ENCODE measurements at regions of chr13 and their contacts with region 1.

Region 1: GRCh38 chr13:106083620-106084350 is 451.7 kb downstream of the EFNB2 start:
- DNase-seq: peak; percentile 86
- H3K4me3 ChIP-seq: no peak overlapping the region
- H3K27ac ChIP-seq: no peak overlapping the region
- H3K4me1 ChIP-seq: no peaks in the 10 kb centered on the region
- H3K27me3 ChIP-seq: no peaks in the 10 kb centered on the region
- CTCF ChIP-seq: peak; percentile 71 to 77
- POLR2A ChIP-seq: no peak

Region 2: DNA sequence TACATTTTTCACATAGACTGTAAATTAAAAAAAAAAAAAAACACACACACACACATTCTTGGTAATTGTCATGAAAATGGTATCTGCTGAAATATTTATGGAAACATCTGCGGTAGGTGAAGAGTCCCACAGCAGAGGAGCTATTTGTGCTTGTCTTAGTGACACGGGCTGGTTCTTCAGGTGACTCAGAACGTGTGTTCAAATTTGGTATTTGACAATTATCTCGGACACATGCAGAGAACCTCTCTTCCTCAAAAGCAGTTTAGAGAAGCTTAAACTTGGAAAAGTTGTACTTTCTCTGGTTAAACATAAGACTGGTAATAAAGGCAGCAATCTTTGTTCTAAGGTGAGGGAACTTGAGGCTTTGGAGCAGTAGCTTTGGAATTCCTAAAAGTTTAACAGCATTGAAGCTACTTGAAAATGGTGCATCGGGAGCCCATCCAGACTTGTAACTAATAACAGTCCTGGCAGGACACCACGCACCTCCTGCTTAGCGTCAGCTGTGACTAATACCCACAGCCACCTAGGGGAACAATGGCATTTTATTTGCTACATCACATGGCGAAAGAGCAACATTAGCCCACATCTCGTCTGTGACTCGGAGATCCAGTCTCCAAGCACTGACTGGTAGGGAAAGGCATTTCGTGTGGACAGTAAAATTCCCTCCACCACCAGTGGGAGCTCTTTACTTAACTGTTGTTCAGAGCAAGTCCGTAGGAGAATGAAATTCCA is 1512.5 kb before region 1 on chr13:
- CTCF ChIA-PET with region 1: no interaction called
- POLR2A ChIA-PET with region 1: no interaction called
- dilution Hi-C with region 1: no loop called
- intact Hi-C with region 1: loop called (anchors 10 kb)
- DNase-seq: peak; percentile 89
- H3K4me3 ChIP-seq: no peak overlapping the region
- H3K27ac ChIP-seq: peak overlapping the region; percentile 4
- H3K4me1 ChIP-seq: no peaks in the 10 kb centered on the region
- H3K27me3 ChIP-seq: no peaks in the 10 kb centered on the region
- CTCF ChIP-seq: peak; percentile 73 to 76
- POLR2A ChIP-seq: no peak

Region 3: GRCh38 chr13:106052200-106052767 is 31.5 kb before region 1 on chr13:
- CTCF ChIA-PET with region 1: no interaction called
- POLR2A ChIA-PET with region 1: no interaction called
- dilution Hi-C with region 1: no loop called
- intact Hi-C with region 1: no loop called
- DNase-seq: no peak
- H3K4me3 ChIP-seq: no peak overlapping the region
- H3K27ac ChIP-seq: no peak overlapping the region
- H3K4me1 ChIP-seq: no peaks in the 10 kb centered on the region
- H3K27me3 ChIP-seq: no peaks in the 10 kb centered on the region
- CTCF ChIP-seq: no peak
- POLR2A ChIP-seq: no peak

Region 4: DNA sequence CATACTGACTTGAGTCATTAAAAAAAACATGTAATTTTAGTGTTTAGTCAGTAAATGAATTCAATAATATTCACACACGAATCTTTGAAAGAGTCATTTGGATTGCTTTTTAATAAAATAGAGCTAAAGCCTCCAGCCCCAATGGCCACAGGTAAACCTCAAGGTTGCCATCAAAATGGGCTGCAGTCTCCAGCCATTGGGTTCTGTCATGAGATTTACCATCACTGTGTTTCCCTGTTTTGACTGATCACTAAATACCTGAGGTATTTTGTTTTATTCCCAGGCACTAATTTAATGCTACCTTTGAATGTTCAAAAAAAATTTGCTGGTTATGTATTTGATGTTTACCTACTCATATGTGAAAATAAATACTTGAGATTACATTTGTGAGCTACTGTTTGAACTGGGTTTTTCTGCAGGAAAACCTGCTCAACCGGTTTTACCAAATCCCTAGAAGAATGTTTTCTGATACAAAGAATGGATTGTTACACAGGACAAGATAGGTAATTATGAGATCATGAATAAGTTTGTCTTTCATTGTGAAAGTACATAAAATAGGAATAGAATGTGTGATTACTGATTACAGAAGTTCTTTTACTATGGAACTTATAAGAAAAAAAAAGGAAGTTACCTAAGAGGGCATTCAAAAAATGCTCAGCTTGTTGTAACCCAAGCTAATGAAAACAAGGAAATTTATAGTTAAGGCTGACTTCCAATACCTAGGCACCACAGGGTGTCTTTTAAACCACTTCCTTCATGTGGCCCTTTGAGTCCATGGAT is 60.3 kb after region 1 on chr13:
- CTCF ChIA-PET with region 1: no interaction called
- POLR2A ChIA-PET with region 1: no interaction called
- dilution Hi-C with region 1: no loop called
- intact Hi-C with region 1: no loop called
- DNase-seq: no peak
- H3K4me3 ChIP-seq: no peak overlapping the region
- H3K27ac ChIP-seq: no peak overlapping the region
- H3K4me1 ChIP-seq: peaks cover 5% of the 10 kb centered on the region
- H3K27me3 ChIP-seq: no peaks in the 10 kb centered on the region
- CTCF ChIP-seq: no peak
- POLR2A ChIP-seq: no peak

Region 5: GRCh38 chr13:106161146-106161545 is 77.4 kb after region 1 on chr13:
- CTCF ChIA-PET with region 1: interaction called, 3 read pairs
- POLR2A ChIA-PET with region 1: no interaction called
- dilution Hi-C with region 1: no loop called
- intact Hi-C with region 1: loop called (anchors 5 kb)
- DNase-seq: peak; percentile 78
- H3K4me3 ChIP-seq: no peak overlapping the region
- H3K27ac ChIP-seq: peak overlapping the region; percentile 40
- H3K4me1 ChIP-seq: peaks cover 20% of the 10 kb centered on the region
- H3K27me3 ChIP-seq: no peaks in the 10 kb centered on the region
- CTCF ChIP-seq: no peak
- POLR2A ChIP-seq: no peak

Region 6: DNA sequence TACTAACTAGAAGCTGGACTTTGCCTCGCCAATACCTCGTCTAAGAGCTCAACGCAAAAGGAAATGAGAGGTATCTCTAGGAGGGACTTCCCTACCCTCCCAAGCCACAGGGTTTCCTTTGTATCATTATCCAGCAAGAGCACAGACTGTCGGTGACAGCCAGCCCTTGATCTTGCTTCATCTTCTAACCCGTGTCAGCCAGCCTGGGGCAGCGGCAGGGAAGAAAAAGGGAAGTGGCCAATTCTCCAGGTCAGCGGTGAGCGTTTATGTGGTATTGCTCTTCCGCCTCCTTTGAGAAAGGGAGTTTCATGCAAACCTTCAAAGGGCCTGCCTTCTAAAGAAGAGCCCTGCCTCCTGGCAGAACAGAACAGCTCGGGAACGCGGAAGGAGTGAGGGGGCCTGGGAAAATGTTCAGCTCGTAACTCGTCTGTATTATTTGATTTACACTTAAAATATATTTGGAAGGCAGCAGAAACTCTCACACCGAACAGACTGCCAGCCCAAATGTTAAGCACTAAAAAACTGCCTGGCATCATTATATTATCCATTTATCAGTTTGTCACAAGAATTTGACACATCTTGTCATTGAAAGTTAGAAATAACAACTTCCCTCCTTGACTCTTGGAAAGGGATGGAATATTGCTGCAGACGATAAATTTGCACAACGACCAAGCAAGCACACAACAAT is 409.9 kb after region 1 on chr13:
- CTCF ChIA-PET with region 1: no interaction called
- POLR2A ChIA-PET with region 1: no interaction called
- dilution Hi-C with region 1: no loop called
- intact Hi-C with region 1: loop called (anchors 10 kb)
- DNase-seq: no peak
- H3K4me3 ChIP-seq: no peak overlapping the region
- H3K27ac ChIP-seq: no peak overlapping the region
- H3K4me1 ChIP-seq: peaks cover 35% of the 10 kb centered on the region
- H3K27me3 ChIP-seq: no peaks in the 10 kb centered on the region
- CTCF ChIP-seq: no peak
- POLR2A ChIP-seq: no peak

Region 7: GRCh38 chr13:106619688-106620555 is 536.1 kb after region 1 on chr13:
- CTCF ChIA-PET with region 1: interaction called, 3 read pairs
- POLR2A ChIA-PET with region 1: no interaction called
- dilution Hi-C with region 1: no loop called
- intact Hi-C with region 1: loop called (anchors 5 kb)
- DNase-seq: peak; percentile 61
- H3K4me3 ChIP-seq: no peak overlapping the region
- H3K27ac ChIP-seq: no peak overlapping the region
- H3K4me1 ChIP-seq: peaks cover 9% of the 10 kb centered on the region
- H3K27me3 ChIP-seq: peaks cover 18 to 31% of the 10 kb centered on the region in 2 experiments
- CTCF ChIP-seq: peak; percentile 79 to 80
- POLR2A ChIP-seq: no peak